Posterior vena cava (tissue), 2 donors: ENCODE measurements at regions of chr16 and their contacts with region 1.

Region 1: GRCh38 chr16:14003074-14003570 is 68.0 kb upstream of the MRTFB start:
- DNase-seq: peak; percentile 87

Region 2: GRCh38 chr16:13957197-13958078 is 45.7 kb before region 1 on chr16:
- intact Hi-C with region 1: loop called in 1 of 2 experiments (anchors 10 kb)
- DNase-seq: peak; percentile 89

Region 3: DNA sequence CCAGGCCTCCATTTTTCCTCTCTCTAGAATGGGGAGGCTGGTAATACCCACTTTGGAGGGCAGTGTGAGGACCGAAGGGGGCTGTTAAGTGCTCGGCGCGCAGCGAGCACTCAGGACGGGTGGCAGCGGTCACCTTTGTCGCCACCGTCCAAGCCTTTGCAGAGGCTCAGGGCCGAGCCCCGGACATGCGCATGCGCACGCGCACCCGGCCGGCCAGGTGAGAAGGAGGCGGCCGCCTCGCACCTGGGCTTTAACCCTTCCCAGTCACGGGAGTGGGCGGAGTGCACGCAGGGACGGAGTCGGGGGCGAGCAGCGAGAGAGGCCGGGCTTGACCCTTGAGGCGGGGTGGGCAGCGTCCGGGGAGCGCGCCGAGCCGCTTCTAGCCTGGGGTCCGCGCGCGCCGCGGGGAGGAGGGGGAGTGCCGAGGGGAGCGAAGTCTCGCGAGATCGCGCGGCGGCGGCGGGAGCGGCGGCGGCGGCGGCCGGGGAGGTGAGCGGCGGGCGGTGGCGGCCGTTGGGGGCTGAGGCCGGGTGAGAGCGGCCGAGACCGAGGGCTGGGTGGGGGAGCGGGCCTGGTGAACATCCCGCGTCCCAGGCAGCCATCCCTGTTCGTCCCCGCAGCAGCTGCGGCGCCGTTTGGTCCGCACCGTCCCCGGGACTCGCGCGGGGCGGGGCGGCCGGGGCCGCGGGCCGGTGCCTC is 67.9 kb after region 1 on chr16 and contains the start of gene MRTFB:
- intact Hi-C with region 1: no loop called
- DNase-seq: peak; percentile 92
- total RNA-seq, gene MRTFB: 41.0 to 42.0 TPM